Activated CD4-positive, alpha-beta memory T cell treated with anti-CD3 and anti-CD28 coated beads for 36 hours (primary cell): ENCODE measurements at regions of chr19 and their contacts with region 1.

Region 1: DNA sequence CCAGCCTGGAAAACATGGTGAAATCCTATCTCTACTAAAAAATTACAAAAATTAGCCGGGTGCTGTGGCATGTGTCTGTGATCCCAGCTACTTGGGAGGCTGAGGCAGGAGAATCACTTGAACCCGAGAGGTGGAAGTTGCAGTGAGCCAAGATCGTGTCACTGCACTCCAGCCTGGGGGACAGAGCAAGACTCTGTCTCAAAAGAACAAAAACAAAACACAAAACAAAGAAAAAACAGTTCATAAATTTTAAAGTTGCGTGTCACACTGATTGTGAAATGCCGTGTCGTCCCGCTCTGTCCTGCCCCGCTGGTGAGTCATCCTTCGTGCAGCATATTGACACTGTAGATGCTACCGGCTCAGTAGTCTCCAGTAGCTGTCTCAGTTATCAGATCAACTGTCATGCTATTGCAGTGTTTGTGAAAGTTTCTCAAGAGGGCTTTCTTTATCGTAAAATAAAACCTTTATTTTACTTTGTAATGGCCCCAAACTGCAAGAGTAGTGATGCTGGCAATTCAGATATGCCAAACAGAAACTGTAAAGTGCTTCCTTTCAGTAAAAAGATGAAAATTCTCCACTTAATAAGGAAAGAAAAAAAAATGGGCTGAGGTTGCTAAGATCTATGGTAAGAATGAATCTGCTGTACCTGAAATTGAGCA is 36.4 kb upstream of the IGFL1 start:
- DNase-seq: peak; percentile 47
- H3K4me3 Mint-ChIP-seq: no peak overlapping the region
- H3K27ac Mint-ChIP-seq: no peak overlapping the region
- H3K4me1 Mint-ChIP-seq: peaks cover 2% of the 10 kb centered on the region
- H3K27me3 Mint-ChIP-seq: peaks cover 57% of the 10 kb centered on the region

Region 2: DNA sequence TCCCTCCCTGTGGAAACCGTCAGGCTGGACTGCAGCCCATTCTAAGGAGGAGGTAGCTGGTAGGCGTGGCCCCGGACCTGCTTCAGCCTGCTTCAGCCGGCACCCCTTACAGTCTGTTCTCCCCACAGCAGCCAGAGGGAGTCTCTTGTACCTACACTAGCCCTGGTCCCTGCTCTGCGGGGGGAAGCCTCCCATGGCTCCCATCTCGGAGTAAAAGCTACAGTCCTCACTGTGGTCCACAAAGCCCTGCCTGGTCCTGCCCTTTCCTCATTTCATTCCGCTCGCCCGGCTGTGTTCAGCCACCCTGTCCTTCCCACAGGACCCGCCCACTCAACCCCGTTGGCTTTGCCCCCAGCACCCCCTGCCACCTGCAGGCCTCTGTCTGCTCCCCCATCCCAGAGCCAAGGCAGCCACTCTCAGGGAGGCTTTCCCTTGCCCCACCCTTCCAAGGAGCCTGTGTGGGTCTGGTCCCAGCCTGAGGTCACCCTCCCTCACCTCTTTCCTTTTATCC is 171.5 kb before region 1 on chr19:
- CTCF ChIA-PET with region 1: interaction called, 44 read pairs
- POLR2A ChIA-PET with region 1: no interaction called
- intact Hi-C with region 1: no loop called
- DNase-seq: no peak
- H3K4me3 Mint-ChIP-seq: no peak overlapping the region
- H3K27ac Mint-ChIP-seq: no peak overlapping the region
- H3K4me1 Mint-ChIP-seq: peaks cover 14% of the 10 kb centered on the region
- H3K27me3 Mint-ChIP-seq: peaks cover 11% of the 10 kb centered on the region

Region 3: GRCh38 chr19:46068345-46069258 is 124.5 kb before region 1 on chr19:
- CTCF ChIA-PET with region 1: no interaction called
- POLR2A ChIA-PET with region 1: no interaction called
- intact Hi-C with region 1: no loop called
- DNase-seq: no peak
- H3K4me3 Mint-ChIP-seq: no peak overlapping the region
- H3K27ac Mint-ChIP-seq: no peak overlapping the region
- H3K4me1 Mint-ChIP-seq: no peaks in the 10 kb centered on the region
- H3K27me3 Mint-ChIP-seq: peaks cover 67% of the 10 kb centered on the region

Region 4: GRCh38 chr19:46256855-46257254 is 63.7 kb after region 1 on chr19:
- CTCF ChIA-PET with region 1: no interaction called
- POLR2A ChIA-PET with region 1: no interaction called
- intact Hi-C with region 1: no loop called
- DNase-seq: no peak
- H3K4me3 Mint-ChIP-seq: no peak overlapping the region
- H3K27ac Mint-ChIP-seq: no peak overlapping the region
- H3K4me1 Mint-ChIP-seq: no peaks in the 10 kb centered on the region
- H3K27me3 Mint-ChIP-seq: peaks cover 31% of the 10 kb centered on the region

Region 5: GRCh38 chr19:46346821-46347571 is 153.9 kb after region 1 on chr19 and contains the start of gene PPP5C:
- CTCF ChIA-PET with region 1: no interaction called
- POLR2A ChIA-PET with region 1: no interaction called
- intact Hi-C with region 1: no loop called
- DNase-seq: peak; percentile 93
- H3K4me3 Mint-ChIP-seq: peak within 1 kb of the TSS; percentile 94
- H3K27ac Mint-ChIP-seq: peak within 1 kb of the TSS; percentile 90
- H3K4me1 Mint-ChIP-seq: peaks cover 47% of the 10 kb centered on the region
- H3K27me3 Mint-ChIP-seq: no peaks in the 10 kb centered on the region
- total RNA-seq, gene PPP5C: 76.9 to 82.5 TPM

Region 6: GRCh38 chr19:46442808-46443450 is 249.8 kb after region 1 on chr19:
- CTCF ChIA-PET with region 1: no interaction called
- POLR2A ChIA-PET with region 1: no interaction called
- intact Hi-C with region 1: no loop called
- DNase-seq: no peak
- H3K4me3 Mint-ChIP-seq: no peak overlapping the region
- H3K27ac Mint-ChIP-seq: no peak overlapping the region
- H3K4me1 Mint-ChIP-seq: no peaks in the 10 kb centered on the region
- H3K27me3 Mint-ChIP-seq: peaks cover 7% of the 10 kb centered on the region